SK-N-SH (cell line): ENCODE measurements at regions of chr2 and their contacts with region 1.

Region 1: GRCh38 chr2:233053928-233054784 is 6.0 kb upstream of the INPP5D start:
- DNase-seq: peak; percentile 92
- H3K4me3 ChIP-seq: peak overlapping the region in 1 of 2 experiments; percentile 24; a peak in 1 of 4 replicates
- H3K27ac ChIP-seq: no peak overlapping the region
- H3K4me1 ChIP-seq: peaks cover 0 to 19% of the 10 kb centered on the region in 2 experiments; a peak in 1 of 4 replicates
- H3K27me3 ChIP-seq: no peaks in the 10 kb centered on the region
- CTCF ChIP-seq: peak; percentile 96
- EP300 ChIP-seq: no peak
- RAD21 ChIP-seq: peak; percentile 61

Region 2: GRCh38 chr2:232854082-232854481 is 200.1 kb before region 1 on chr2:
- CTCF ChIA-PET with region 1: interaction called, 20 read pairs
- POLR2A ChIA-PET with region 1: no interaction called
- DNase-seq: no peak
- H3K4me3 ChIP-seq: no peak overlapping the region
- H3K27ac ChIP-seq: no peak overlapping the region; a peak in 1 of 4 replicates
- H3K4me1 ChIP-seq: peaks cover 0 to 9% of the 10 kb centered on the region in 2 experiments; a peak in 1 of 4 replicates
- H3K27me3 ChIP-seq: no peaks in the 10 kb centered on the region
- CTCF ChIP-seq: no peak
- EP300 ChIP-seq: no peak
- RAD21 ChIP-seq: no peak

Region 3: DNA sequence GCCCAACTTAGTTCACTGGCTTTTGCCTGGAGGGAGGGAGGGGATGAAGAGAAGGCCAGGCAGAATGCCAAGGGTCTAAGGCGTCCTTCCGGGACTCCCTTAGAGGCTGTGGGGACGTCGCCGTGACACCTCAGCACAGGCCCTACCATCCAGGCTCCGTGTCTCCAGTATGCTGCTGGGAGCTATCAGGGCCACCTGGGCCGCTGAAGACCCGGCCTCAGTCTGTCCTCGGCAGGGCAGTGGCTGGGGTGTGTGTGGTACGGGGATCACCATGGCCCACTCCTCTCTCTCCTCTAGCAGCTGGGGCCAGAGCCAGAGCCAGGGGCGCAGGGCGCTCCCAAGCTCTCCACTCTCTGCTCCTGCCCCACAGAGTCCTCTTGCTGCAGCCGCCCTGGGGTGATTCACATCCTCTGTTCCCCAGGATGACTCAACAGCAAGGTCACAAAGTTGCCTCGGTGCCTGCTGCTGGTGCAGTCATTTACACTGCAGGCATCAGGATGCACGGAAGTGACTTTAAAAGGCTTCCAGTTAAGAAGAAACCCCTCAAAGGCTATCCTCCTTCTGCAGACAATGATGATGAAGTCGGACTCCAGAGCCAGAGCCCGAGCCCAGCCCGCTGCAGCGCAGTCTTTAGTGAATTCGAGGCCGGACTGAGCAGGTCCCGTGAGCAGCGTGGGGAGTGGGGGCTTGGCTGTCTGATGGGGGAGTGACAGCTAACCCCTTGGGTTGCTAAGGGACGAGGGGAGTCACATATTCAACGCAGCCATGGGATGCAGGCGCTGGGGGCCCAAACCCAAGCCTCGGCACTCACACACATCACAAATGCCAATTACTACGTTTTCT is 152.2 kb before region 1 on chr2:
- CTCF ChIA-PET with region 1: no interaction called
- POLR2A ChIA-PET with region 1: no interaction called
- DNase-seq: peak; percentile 48
- H3K4me3 ChIP-seq: no peak overlapping the region
- H3K27ac ChIP-seq: peak overlapping the region in 1 of 2 experiments; percentile 70; a peak in 2 of 4 replicates
- H3K4me1 ChIP-seq: peaks cover 0 to 12% of the 10 kb centered on the region in 2 experiments; a peak in 3 of 4 replicates
- H3K27me3 ChIP-seq: no peaks in the 10 kb centered on the region
- CTCF ChIP-seq: no peak
- EP300 ChIP-seq: no peak; a peak in 1 of 4 replicates
- RAD21 ChIP-seq: no peak

Region 4: DNA sequence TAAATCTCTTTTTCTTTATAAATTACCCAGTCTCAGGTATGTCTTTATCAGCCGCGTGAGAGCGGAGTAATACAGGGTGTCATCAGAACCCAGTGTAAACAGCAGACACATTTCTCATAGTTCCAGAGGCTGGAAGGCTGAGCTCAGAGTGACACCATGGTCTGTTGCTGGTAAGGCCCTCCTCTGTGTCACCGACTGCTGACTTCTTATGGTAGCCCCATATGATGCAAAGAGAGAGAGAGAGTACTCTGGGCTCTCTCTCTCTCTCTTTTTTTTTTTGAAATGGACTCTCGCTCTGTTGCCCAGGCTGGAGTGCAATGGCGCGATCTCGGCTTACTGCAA is 124.1 kb before region 1 on chr2:
- CTCF ChIA-PET with region 1: no interaction called
- POLR2A ChIA-PET with region 1: no interaction called
- DNase-seq: no peak
- H3K4me3 ChIP-seq: no peak overlapping the region
- H3K27ac ChIP-seq: no peak overlapping the region
- H3K4me1 ChIP-seq: no peaks in the 10 kb centered on the region; a peak in 1 of 4 replicates
- H3K27me3 ChIP-seq: peaks cover 33% of the 10 kb centered on the region
- CTCF ChIP-seq: no peak
- EP300 ChIP-seq: no peak
- RAD21 ChIP-seq: no peak

Region 5: GRCh38 chr2:232979871-232980461 is 74.2 kb before region 1 on chr2:
- CTCF ChIA-PET with region 1: interaction called, 11 read pairs
- POLR2A ChIA-PET with region 1: no interaction called
- DNase-seq: no peak
- H3K4me3 ChIP-seq: no peak overlapping the region
- H3K27ac ChIP-seq: no peak overlapping the region
- H3K4me1 ChIP-seq: peaks cover 0 to 13% of the 10 kb centered on the region in 2 experiments; a peak in 1 of 4 replicates
- H3K27me3 ChIP-seq: no peaks in the 10 kb centered on the region
- CTCF ChIP-seq: peak; percentile 46
- EP300 ChIP-seq: no peak
- RAD21 ChIP-seq: no peak

Region 6: DNA sequence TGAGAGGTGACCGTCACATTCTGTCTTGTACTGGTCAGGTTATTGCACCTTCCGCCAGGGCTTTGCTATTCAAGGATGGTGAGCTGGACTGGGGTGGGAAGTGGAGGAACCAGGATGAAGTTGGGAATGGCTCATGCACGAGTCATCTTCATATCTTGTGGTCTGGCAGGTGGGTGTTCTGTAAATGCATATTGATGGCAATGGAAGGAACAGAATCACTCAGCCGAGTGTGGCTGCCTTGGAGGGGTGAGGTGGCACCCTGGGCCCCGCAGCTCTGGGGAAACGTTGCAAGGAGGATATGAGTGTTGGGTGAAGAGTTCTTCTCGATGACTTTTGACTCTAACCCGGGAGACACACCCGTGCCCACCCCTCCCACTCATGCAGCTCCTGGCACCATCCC is 20.5 kb before region 1 on chr2:
- CTCF ChIA-PET with region 1: interaction called, 32 read pairs
- POLR2A ChIA-PET with region 1: no interaction called
- DNase-seq: no peak
- H3K4me3 ChIP-seq: no peak overlapping the region
- H3K27ac ChIP-seq: no peak overlapping the region
- H3K4me1 ChIP-seq: no peaks in the 10 kb centered on the region
- H3K27me3 ChIP-seq: no peaks in the 10 kb centered on the region
- CTCF ChIP-seq: no peak
- EP300 ChIP-seq: no peak
- RAD21 ChIP-seq: no peak

Region 7: GRCh38 chr2:233041722-233042323 is 12.3 kb before region 1 on chr2:
- CTCF ChIA-PET with region 1: interaction called, 32 read pairs
- POLR2A ChIA-PET with region 1: no interaction called
- DNase-seq: no peak
- H3K4me3 ChIP-seq: no peak overlapping the region
- H3K27ac ChIP-seq: no peak overlapping the region
- H3K4me1 ChIP-seq: no peaks in the 10 kb centered on the region
- H3K27me3 ChIP-seq: 0 out of 2 replicates have a peak, but pooled peaks cover 11% of the 10 kb centered on the region
- CTCF ChIP-seq: no peak
- EP300 ChIP-seq: no peak
- RAD21 ChIP-seq: no peak

Region 8: DNA sequence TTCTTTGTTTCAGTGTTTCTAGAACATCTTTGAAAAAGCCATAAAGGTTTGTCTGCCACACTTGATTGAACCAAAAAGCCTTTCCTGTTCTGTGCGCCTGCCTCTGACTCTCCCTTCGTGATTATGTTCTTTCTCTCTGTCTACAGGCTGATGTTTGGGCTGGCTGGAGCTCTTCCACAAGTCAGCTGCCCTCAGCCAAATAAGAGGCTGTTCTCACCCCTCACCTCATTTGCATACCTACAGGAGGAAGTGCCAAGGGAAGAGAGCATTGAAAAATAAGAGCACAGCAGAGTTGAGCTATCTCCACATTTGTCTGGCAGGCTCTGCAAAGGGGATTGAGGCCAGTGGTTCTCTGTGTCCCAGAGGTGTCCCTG is 21.8 kb after region 1 on chr2:
- CTCF ChIA-PET with region 1: interaction called, 11 read pairs
- POLR2A ChIA-PET with region 1: no interaction called
- DNase-seq: no peak
- H3K4me3 ChIP-seq: no peak overlapping the region
- H3K27ac ChIP-seq: no peak overlapping the region
- H3K4me1 ChIP-seq: no peaks in the 10 kb centered on the region
- H3K27me3 ChIP-seq: no peaks in the 10 kb centered on the region; the same call in 1 of the 2 replicates
- CTCF ChIP-seq: no peak
- EP300 ChIP-seq: no peak
- RAD21 ChIP-seq: no peak

Region 9: GRCh38 chr2:233234264-233234663 is 180.1 kb after region 1 on chr2:
- CTCF ChIA-PET with region 1: no interaction called
- POLR2A ChIA-PET with region 1: no interaction called
- DNase-seq: no peak
- H3K4me3 ChIP-seq: no peak overlapping the region
- H3K27ac ChIP-seq: no peak overlapping the region
- H3K4me1 ChIP-seq: no peaks in the 10 kb centered on the region
- H3K27me3 ChIP-seq: no peaks in the 10 kb centered on the region
- CTCF ChIP-seq: no peak
- EP300 ChIP-seq: no peak
- RAD21 ChIP-seq: no peak